ENCODE measurements at regions of chr15 and their contacts with region 1.

Region 1: DNA sequence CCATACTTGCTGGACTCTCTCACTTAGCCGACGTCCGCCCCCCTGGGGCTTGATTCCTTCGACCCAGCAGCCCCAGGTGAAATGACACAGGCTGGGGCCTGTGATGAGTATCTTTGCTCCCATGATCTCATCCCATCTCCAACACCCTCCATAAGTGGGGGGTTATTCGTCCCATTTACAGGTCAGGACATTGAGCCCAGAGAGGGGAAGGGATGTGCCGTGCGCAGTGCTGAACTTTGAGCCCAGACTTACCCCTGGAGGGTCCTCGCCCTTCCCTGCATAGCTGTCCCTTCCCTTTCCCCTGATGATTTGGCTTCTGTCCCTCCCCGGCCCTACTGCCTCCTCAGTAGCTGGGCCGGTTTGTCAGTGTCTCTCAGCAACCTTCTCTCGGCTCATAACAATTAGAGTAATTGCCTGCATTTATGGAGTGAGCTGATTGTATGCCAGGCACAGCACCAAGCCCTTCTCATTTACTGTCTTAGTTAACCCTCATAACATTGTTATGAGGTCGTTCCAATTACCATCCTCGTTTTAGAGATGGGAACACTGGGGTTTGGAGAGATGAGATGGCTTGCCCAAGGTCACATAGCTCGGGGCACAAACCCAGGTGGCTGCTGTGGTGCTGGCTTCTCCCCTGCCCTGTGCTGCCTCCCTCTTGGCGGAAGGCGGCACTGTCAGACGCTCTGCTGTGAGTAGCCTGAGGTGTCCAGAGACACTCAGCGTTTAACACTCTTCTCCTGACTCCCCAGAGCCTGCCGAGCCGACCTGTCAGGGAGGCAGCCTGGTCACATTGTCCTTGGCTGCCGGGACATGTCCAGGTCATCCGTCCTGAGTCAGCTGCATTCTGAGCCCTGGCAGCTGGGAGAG is 4.4 kb downstream of the LMAN1L start:
- DNase-seq: no peak
- H3K4me3 ChIP-seq: no peak overlapping the region
- H3K27ac ChIP-seq: no peak overlapping the region
- H3K4me1 ChIP-seq: peaks cover 0 to 12% (median 6%) of the 10 kb centered on the region in 4 experiments; a peak in 6 of 7 replicates
- H3K27me3 ChIP-seq: no peaks in the 10 kb centered on the region
- CTCF ChIP-seq: peak in 2 of 3 experiments; percentile 35 to 41; a peak in 3 of 4 replicates
- EP300 ChIP-seq: no peak
- POLR2A ChIP-seq: no peak
- RAD21 ChIP-seq: peak in 1 of 2 experiments; percentile 26; a peak in 1 of 4 replicates

Region 2: GRCh38 chr15:74519311-74519710 is 297.7 kb before region 1 on chr15:
- CTCF ChIA-PET with region 1: no interaction called
- POLR2A ChIA-PET with region 1: no interaction called
- DNase-seq: no peak
- H3K4me3 ChIP-seq: no peak overlapping the region
- H3K27ac ChIP-seq: no peak overlapping the region
- H3K4me1 ChIP-seq: no peaks in the 10 kb centered on the region; a peak in 1 of 7 replicates
- H3K27me3 ChIP-seq: no peaks in the 10 kb centered on the region
- CTCF ChIP-seq: no peak
- EP300 ChIP-seq: no peak
- POLR2A ChIP-seq: no peak
- RAD21 ChIP-seq: no peak

Region 3: DNA sequence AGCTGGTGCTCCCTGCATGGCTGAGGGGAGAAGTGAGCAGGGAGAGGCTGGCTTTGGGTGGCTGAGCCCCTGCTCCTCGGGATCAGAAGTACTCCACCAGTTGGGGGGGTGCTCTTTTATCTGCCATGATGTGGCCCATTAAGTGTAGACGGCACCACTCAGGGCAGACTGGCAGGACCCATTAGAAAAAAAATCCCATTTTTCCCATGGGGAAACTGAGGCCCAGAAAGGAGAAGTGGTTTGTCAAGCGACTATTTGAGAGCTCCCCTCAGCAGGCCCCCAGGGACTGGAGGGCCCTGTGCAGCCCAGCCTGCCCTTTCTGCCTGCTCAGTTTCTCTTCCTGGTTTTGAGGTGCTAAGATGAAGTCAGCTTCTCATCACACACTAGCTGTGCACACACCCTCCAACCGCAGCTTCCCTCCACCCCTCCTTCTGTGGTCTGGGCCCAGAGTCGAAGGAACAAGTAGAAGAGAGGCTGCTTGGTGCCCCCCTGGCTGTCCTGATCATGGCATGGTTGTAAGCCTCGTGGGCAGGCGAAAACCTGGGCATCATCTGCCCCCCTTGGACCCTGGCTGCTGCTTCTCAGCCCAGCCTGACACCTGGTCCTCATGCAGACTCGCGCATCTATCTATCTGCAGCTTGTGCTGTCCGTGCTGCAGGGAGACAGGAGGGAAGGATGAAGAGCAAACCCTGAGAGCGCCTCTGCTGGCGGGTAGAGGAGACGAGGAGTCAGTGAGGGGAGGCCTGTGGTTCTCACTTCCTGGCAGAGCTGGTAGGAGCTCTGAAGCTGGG is 29.6 kb before region 1 on chr15:
- CTCF ChIA-PET with region 1: interaction called, 35 read pairs
- POLR2A ChIA-PET with region 1: no interaction called
- DNase-seq: peak in 1 of 2 experiments; percentile 71
- H3K4me3 ChIP-seq: no peak overlapping the region
- H3K27ac ChIP-seq: no peak overlapping the region
- H3K4me1 ChIP-seq: peaks cover 4 to 34% (median 22%) of the 10 kb centered on the region in 4 experiments
- H3K27me3 ChIP-seq: no peaks in the 10 kb centered on the region
- CTCF ChIP-seq: peak; percentile 79 to 95 (median 88)
- EP300 ChIP-seq: no peak
- POLR2A ChIP-seq: no peak
- RAD21 ChIP-seq: peak; percentile 11 to 47; a peak in 2 of 4 replicates

Region 4: GRCh38 chr15:74835307-74835823 is 18.3 kb after region 1 on chr15:
- CTCF ChIA-PET with region 1: interaction called, 42 read pairs
- POLR2A ChIA-PET with region 1: interaction called, 5 read pairs
- DNase-seq: peak; percentile 82 to 98
- H3K4me3 ChIP-seq: no peak overlapping the region
- H3K27ac ChIP-seq: peak overlapping the region; percentile 47; the same call in 1 of the 2 replicates
- H3K4me1 ChIP-seq: peaks cover 0 to 4% (median 2%) of the 10 kb centered on the region in 4 experiments; a peak in 4 of 7 replicates
- H3K27me3 ChIP-seq: no peaks in the 10 kb centered on the region; a peak in 1 of 7 replicates
- CTCF ChIP-seq: peak; percentile 73 to 98 (median 97)
- EP300 ChIP-seq: peak in 1 of 2 experiments; percentile 35; a peak in 1 of 3 replicates
- POLR2A ChIP-seq: no peak
- RAD21 ChIP-seq: peak; percentile 62 to 76